ENCODE measurements at regions of chr1 and their contacts with region 1.

Region 1: GRCh38 chr1:21270086-21270689 is 20.1 kb downstream of the ECE1 start:
- DNase-seq: peak; percentile 74 to 75
- ATAC-seq: peak; percentile 65 to 78; a peak in 5 of 6 replicates
- H3K4me3 ChIP-seq: no peak overlapping the region
- H3K27ac ChIP-seq: peak overlapping the region; percentile 95; a peak in 5 of 6 replicates
- H3K4me1 ChIP-seq: peaks cover 55% of the 10 kb centered on the region
- CTCF ChIP-seq: peak; percentile 72
- EP300 ChIP-seq: no peak
- POLR2A ChIP-seq: no peak
- RAD21 ChIP-seq: peak; percentile 35 to 57; a peak in 3 of 5 replicates

Region 2: GRCh38 chr1:21114431-21114830 is 155.8 kb before region 1 on chr1:
- CTCF ChIA-PET with region 1: no interaction called
- POLR2A ChIA-PET with region 1: no interaction called
- DNase-seq: no peak
- ATAC-seq: no peak
- H3K4me3 ChIP-seq: no peak overlapping the region
- H3K27ac ChIP-seq: no peak overlapping the region
- H3K4me1 ChIP-seq: peaks cover 23% of the 10 kb centered on the region
- CTCF ChIP-seq: no peak
- EP300 ChIP-seq: no peak
- POLR2A ChIP-seq: no peak
- RAD21 ChIP-seq: no peak

Region 3: DNA sequence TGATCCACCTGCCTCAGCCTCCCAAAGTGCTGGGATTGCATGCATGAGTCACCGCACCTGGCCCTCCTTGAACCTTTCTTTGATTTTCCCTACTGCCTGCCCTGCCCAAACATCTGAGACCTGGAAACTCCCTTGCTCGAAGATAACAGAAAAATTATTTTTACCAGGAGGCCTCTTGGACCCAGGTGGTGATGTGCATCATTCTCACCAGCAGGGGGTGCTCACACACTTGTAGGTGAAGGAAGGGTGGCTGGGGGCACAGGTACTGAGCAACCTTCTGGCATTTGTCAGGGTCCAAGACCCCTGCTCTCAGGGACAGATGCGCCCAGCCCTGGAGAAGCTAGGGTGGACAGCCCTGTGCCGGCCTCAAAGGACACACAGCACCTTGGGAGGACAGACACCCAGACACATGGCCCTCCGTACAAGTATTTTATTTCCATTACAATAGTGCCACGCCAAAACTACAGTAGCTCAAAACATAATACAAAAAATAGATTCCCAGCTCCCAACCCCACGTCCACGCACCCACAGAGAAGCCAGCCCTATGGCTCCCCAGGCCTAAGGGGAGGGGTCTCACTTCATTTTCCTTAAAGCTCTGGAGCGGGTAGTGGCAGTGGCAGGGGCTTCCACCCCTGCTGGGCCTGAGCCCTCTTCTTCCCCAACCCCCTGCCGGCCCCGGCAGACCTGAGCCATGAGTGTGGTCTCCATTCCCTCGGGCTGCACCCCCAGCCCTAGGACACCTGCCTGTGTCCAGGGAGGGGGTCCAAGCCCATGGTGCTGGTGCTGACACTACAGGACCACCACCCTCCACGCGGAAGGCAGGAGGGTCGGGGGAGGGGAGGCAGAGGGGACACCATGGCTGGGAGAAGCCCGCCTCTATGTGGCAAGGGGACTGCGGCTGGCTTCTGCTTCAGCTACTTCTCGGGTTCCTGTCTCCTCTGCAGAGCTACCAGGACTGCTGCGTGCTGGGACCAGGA is 53.1 kb before region 1 on chr1:
- CTCF ChIA-PET with region 1: no interaction called
- POLR2A ChIA-PET with region 1: no interaction called
- DNase-seq: peak; percentile 14 to 60
- ATAC-seq: peak; percentile 57 to 71; a peak in 4 of 6 replicates
- H3K4me3 ChIP-seq: no peak overlapping the region
- H3K27ac ChIP-seq: no peak overlapping the region
- H3K4me1 ChIP-seq: peaks cover 2% of the 10 kb centered on the region; the same call in 2 of the 3 replicates
- CTCF ChIP-seq: peak; percentile 61
- EP300 ChIP-seq: no peak
- POLR2A ChIP-seq: no peak
- RAD21 ChIP-seq: peak; percentile 44 to 63; a peak in 3 of 5 replicates

Region 4: DNA sequence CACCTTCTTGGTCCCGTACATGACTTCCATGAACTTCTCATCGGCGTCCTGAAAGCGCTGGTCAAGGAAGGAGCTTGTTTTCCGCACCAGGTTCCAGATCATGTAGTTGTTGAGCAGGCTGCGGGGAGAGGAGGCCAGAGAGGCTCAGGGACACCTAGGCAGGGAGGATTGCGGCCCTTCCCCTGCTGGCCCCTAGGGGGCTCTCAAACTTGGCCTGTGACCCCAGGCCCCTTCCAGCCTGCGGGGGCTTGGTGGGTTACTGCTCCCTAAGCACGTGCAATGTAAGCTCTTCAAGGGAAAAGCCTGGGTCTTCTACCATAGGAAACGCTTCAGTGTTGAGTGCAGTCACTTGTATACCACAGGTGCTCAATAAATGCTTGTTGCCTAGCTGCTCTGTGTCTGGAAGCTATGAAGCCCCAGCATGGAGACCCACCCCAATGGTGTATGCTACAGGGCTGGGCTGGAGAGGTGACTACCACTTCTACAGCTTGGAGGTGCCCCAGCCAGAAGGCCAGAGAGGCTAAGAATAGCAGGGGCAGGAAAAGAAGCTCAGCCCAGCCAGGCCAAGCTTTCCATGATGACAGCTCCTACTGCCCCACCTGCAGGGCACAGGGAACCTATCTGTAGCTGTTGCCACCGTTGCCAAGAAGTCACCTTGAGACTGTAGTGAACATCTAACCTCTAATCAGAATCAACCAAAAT is 25.1 kb before region 1 on chr1:
- CTCF ChIA-PET with region 1: interaction called, 11 read pairs
- POLR2A ChIA-PET with region 1: no interaction called
- DNase-seq: no peak
- ATAC-seq: peak in 1 of 2 experiments; percentile 70; a peak in 3 of 6 replicates
- H3K4me3 ChIP-seq: no peak overlapping the region
- H3K27ac ChIP-seq: no peak overlapping the region
- H3K4me1 ChIP-seq: peaks cover 6% of the 10 kb centered on the region; the same call in 1 of the 3 replicates
- CTCF ChIP-seq: peak; percentile 30; the same call in 1 of the 3 replicates
- EP300 ChIP-seq: no peak
- POLR2A ChIP-seq: no peak
- RAD21 ChIP-seq: no peak

Region 5: DNA sequence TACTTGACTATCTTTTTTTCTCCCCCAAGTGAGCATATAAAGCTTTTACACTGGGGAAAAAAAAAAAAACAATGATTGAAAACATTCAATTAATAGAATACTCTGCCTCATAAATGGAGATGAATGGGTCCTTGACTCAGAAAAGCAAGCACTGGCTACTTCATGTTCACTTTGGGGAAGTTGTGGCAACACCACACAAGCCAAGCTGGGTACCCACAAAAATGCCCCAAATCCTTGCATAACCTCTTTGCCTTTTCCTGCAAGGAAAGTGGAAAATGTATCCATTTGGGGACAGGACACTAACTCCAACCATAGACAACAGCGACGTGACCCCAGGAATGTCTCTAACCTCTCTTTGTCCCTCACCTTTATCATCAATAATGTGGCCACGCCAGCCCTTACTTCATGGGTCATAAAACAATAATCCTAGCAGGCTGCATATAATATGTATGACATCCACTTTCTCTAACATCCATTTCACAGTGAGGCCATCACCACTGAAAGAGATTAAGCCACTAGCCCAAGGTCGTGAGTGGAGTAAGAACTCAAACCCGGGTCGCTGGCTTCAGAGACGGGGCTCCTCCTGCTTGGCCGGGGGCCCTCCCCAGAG is 17.8 kb after region 1 on chr1:
- CTCF ChIA-PET with region 1: interaction called, 24 read pairs
- POLR2A ChIA-PET with region 1: no interaction called
- DNase-seq: no peak
- ATAC-seq: no peak
- H3K4me3 ChIP-seq: no peak overlapping the region
- H3K27ac ChIP-seq: no peak overlapping the region
- H3K4me1 ChIP-seq: peaks cover 32% of the 10 kb centered on the region
- CTCF ChIP-seq: no peak
- EP300 ChIP-seq: no peak
- POLR2A ChIP-seq: no peak
- RAD21 ChIP-seq: no peak

Region 6: GRCh38 chr1:21293537-21294265 is 23.5 kb after region 1 on chr1:
- CTCF ChIA-PET with region 1: interaction called, 24 read pairs
- POLR2A ChIA-PET with region 1: no interaction called
- DNase-seq: no peak
- ATAC-seq: no peak
- H3K4me3 ChIP-seq: no peak overlapping the region
- H3K27ac ChIP-seq: peak overlapping the region in 1 of 2 experiments; percentile 59; a peak in 3 of 6 replicates
- H3K4me1 ChIP-seq: peaks cover 51% of the 10 kb centered on the region
- CTCF ChIP-seq: no peak
- EP300 ChIP-seq: no peak
- POLR2A ChIP-seq: no peak
- RAD21 ChIP-seq: no peak

Region 7: DNA sequence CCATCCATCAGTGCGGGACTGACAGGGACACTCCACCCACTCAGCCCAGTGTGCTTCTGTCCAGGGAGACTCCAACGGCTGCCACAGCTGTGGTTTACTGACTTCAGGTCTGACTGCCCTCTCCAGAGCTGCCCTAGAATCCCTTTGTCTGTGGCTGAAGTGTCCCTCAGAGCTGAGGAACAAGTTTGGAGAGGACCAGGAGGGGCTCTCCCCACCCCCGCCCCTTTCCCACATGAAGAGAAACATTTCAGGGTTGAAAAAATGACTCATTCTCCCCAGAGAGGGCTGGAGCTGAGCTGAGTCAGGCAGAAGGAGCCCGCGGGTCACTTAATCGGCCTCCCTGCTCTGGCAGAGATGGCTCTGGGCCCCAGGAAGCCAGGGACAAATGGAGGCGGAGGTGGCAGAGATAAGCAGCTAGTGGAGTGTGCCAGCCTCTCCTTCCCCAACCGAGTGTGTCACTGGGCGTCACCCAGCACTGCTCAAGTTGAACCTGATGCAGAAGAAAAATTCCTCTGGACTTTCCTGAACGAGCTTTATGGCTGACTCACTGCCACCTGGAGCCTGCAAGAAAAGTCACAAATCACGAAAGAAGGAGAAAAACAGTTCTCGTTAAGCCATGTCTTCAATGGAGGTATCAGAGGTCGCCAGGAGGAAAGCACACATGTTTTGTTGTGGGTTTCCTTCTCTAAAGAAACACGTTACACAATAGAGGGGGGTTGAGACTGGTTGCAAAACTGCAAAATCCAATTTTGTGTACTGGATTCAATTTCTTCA is 54.4 kb after region 1 on chr1:
- CTCF ChIA-PET with region 1: interaction called, 12 read pairs
- POLR2A ChIA-PET with region 1: no interaction called
- DNase-seq: peak; percentile 75 to 77
- ATAC-seq: peak; percentile 78 to 79
- H3K4me3 ChIP-seq: 0 out of 3 replicates have a peak overlapping the region, but pooled peaks have one; percentile 12
- H3K27ac ChIP-seq: peak overlapping the region; percentile 94 to 98
- H3K4me1 ChIP-seq: peaks cover 88% of the 10 kb centered on the region
- CTCF ChIP-seq: no peak
- EP300 ChIP-seq: no peak; a peak in 2 of 5 replicates
- POLR2A ChIP-seq: no peak
- RAD21 ChIP-seq: peak in 1 of 2 experiments; percentile 22; a peak in 1 of 5 replicates

Measured in A549 (cell line).